Cardiac septum (tissue), 1 donor: ENCODE measurements at regions of chr17 and their contacts with region 1.

Region 1: DNA sequence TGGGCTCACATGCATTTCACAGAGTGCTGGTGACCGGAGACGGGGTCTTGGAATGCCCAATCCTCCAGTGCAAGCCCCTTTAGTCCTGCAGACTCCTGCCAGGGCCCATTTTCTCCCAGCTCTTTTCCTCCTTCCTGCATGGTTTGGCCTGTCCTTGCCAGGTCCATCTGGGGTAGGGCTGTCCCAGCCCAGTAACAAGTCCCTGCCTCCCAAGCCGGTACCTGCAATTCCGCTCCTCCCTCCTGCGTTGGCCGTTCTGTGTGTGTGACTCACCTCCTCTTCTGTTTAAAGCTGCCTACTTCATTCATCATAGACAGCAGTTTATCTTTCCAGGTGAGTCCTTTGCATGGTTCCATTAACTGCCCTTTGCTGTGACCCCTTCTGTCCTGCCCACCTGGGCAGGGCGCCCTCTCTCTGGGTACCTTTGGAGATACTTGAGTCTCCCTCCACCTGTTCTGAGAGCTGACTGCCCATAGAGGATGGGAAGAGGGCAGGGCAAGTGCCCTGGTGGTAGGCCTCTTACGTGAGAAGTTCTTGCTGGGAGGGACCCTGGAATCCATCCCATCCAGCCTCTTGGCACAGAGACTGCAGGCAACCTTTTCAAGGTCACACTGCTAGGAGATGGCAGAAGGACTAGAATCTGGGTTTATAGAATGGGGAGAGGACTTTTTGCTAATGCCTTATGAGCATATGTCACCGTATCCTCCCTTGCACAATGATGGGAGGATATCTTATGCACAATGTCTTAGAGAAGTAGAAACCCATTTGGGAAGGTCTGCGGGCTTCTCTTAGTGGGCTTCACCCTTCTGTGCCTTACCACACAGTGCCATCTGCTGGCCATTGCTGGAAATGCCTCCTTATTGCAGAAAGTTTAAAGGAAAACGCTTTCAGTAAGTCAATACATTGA is 29.7 kb upstream of the LGALS9 start:
- DNase-seq: peak; percentile 85

Region 2: DNA sequence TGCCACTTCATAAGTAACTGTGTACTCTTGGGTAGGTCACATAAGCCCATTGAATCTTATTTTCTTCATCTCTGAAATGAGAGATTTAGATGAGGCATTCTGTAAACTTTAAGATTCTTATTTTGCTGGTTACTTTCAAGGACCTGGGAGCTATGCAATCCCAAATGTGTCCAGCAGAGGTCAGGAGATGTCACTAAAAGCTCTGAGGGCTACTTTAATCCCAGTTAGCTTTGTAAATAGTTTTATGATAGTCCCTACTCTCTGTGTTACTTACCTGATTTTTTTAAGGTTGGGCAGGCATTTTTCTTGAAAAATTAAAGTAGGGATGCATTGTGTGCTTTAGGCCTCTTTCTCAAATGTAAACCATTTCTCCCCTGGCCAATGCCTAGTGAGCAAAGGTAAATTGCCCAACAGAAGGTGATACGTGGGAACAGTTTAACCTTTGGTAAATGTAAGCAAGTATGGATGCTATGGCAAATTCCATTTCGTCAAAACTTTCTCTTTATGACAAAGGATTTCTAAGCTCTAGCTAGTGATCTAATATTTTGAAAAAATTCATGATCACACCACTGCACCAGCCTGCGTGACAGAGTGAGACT is 364.5 kb before region 1 on chr17:
- intact Hi-C with region 1: loop called (anchors 1 kb)
- DNase-seq: no peak

Region 3: DNA sequence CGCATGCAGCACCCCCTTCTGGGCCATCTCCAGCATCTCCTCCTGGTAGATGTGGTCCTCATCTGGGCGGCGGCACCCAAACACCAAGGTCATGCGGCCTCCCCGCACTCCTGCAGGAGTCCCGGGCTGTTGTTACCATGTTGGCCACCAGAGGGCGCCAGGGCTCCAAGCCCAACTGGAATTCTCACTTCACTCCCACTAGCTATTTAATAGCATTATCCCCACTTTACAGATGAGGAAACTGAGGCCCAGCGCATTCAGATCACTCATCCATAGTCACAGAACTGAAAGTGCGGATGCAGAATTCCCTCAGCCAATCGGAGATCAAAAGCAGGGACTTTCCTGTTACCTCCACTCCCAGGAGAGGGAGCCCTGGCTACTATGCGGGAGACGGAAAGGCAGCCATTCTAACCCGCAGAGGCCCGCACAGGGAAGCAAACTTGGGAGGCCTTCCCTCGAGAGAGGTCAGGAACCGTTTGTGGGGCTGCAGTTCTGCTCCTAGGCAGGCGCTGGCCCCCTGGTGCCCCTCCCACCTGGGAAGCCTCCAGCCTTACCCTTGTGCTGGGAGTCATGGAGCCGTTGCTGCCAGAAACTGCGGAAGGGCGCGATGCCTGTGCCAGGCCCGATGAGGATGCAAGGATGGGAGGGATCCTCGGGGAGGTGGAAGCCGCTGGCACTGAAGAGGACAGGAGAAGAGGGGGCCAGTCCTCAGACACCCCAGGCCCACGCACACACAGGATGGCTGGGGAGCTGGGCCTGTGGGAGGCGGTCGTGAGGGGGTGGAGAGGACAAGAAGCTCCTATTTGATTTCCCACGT is 159.0 kb after region 1 on chr17:
- intact Hi-C with region 1: loop called (anchors 5 kb)
- DNase-seq: peak; percentile 84